H1 (cell line): ENCODE measurements at regions of chr2 and their contacts with region 1.

Region 1: GRCh38 chr2:39728941-39729351 is 50.1 kb downstream of the THUMPD2 start:
- DNase-seq: peak; percentile 3 to 69
- H3K4me3 ChIP-seq: no peak overlapping the region
- H3K27ac ChIP-seq: no peak overlapping the region
- H3K4me1 ChIP-seq: no peaks in the 10 kb centered on the region
- H3K27me3 ChIP-seq: no peaks in the 10 kb centered on the region
- CTCF ChIP-seq: peak; percentile 73 to 77 (median 74)
- EP300 ChIP-seq: no peak
- POLR2A ChIP-seq: no peak
- RAD21 ChIP-seq: peak; percentile 78 to 80

Region 2: GRCh38 chr2:39379643-39380524 is 349.1 kb before region 1 on chr2:
- CTCF ChIA-PET with region 1: interaction called, 18 read pairs
- POLR2A ChIA-PET with region 1: no interaction called
- DNase-seq: no peak
- H3K4me3 ChIP-seq: no peak overlapping the region
- H3K27ac ChIP-seq: no peak overlapping the region
- H3K4me1 ChIP-seq: peaks cover 3 to 6% (median 4%) of the 10 kb centered on the region in 4 experiments; a peak in 6 of 7 replicates
- H3K27me3 ChIP-seq: peaks cover 0 to 1% (median 0%) of the 10 kb centered on the region in 4 experiments; a peak in 1 of 7 replicates
- CTCF ChIP-seq: peak in 2 of 3 experiments; percentile 29 to 35; a peak in 2 of 4 replicates
- EP300 ChIP-seq: no peak
- POLR2A ChIP-seq: no peak
- RAD21 ChIP-seq: peak; percentile 39 to 44; a peak in 3 of 4 replicates

Region 3: GRCh38 chr2:39513641-39514094 is 215.3 kb before region 1 on chr2:
- CTCF ChIA-PET with region 1: interaction called, 30 read pairs
- POLR2A ChIA-PET with region 1: no interaction called
- DNase-seq: no peak
- H3K4me3 ChIP-seq: no peak overlapping the region
- H3K27ac ChIP-seq: no peak overlapping the region
- H3K4me1 ChIP-seq: peaks cover 5 to 29% (median 15%) of the 10 kb centered on the region in 4 experiments
- H3K27me3 ChIP-seq: no peaks in the 10 kb centered on the region
- CTCF ChIP-seq: peak; percentile 10 to 60 (median 46)
- EP300 ChIP-seq: no peak
- POLR2A ChIP-seq: no peak
- RAD21 ChIP-seq: peak; percentile 52 to 69; a peak in 3 of 4 replicates

Region 4: DNA sequence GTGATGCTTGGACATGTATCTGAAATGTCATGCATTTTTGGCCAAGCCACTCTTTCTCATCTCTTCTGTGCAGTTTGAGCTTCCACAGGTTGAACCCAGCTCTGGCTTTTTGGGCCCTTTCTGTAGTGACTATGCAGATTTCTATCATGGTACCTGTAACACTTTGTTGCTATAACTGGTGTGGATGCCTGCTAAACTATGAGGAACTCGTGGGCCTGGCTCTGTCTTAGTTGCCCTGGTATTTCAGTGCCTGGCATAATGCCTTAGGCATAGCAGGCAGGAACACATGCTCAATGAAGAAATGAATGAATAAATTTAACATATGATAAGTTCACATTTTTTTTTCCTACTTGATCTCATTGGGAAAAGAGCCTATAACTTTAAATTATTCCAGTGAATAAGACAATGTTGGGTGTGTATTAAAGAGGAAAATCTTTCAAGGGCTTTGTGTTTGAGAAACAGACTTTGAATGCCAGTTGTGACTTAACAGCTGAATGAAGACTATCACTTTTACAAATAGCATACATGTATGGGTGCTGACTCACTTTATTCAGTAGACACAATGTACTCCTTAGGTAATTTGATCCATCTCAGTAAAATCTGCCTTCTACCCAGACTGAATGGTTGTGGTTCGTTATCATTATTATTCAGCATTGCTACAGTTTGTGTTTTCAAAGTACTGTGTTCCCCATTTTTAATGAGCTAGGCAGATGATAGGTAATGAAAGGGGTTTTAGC is 205.5 kb before region 1 on chr2:
- CTCF ChIA-PET with region 1: interaction called, 30 read pairs
- POLR2A ChIA-PET with region 1: no interaction called
- DNase-seq: no peak
- H3K4me3 ChIP-seq: no peak overlapping the region
- H3K27ac ChIP-seq: no peak overlapping the region
- H3K4me1 ChIP-seq: peaks cover 0 to 4% (median 0%) of the 10 kb centered on the region in 4 experiments; a peak in 1 of 7 replicates
- H3K27me3 ChIP-seq: no peaks in the 10 kb centered on the region
- CTCF ChIP-seq: no peak
- EP300 ChIP-seq: no peak
- POLR2A ChIP-seq: no peak
- RAD21 ChIP-seq: no peak

Region 5: DNA sequence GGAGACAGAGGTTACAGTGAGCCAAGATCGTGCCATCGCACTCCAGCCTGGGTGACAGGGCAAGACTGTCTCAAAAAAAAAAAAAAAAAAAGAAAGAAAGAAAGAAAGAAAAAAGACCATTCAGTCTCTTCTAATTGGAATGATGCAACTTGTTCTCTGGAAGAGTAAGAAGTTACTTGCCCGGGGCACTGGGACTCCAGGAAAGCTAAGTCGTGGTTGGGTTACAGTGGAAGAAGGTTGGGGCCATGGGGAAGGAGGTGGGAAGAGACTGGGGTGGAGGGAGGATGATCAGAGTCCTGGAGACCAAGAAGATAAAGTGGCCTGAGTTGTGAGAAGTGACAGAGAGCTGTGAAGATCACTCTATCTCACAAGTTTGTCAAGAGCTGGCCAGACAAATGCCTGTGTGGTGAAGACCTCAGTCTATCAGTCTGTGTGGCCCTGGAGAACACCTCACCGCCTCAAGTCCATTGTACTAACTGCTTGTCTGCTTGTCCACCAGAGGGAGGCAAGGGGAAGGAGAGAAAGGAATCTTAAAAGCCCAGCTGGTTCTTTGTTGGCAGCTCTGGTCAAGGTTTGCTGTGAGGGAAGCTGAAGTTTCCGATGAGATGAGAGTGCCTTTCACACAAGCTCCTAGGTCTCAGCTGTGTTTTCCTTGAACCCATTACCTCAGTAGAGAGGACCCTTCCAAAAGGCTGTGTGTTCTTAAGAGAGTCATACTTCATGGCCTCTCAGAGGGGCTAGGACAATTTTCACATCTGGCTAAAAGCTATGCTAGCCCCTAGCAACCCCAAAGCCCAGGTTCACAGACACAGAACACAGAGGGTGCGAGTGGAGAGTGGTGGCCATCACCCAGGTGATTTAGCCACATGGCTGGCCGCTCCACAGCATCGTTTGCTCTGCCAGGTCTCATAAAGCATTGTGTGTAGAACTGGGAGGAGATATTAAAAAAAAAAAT is 135.2 kb before region 1 on chr2:
- CTCF ChIA-PET with region 1: interaction called, 109 read pairs
- POLR2A ChIA-PET with region 1: no interaction called
- DNase-seq: peak in 1 of 2 experiments; percentile 15
- H3K4me3 ChIP-seq: no peak overlapping the region
- H3K27ac ChIP-seq: no peak overlapping the region
- H3K4me1 ChIP-seq: peaks cover 0 to 5% (median 1%) of the 10 kb centered on the region in 4 experiments; a peak in 1 of 7 replicates
- H3K27me3 ChIP-seq: no peaks in the 10 kb centered on the region
- CTCF ChIP-seq: peak; percentile 54 to 88 (median 71)
- EP300 ChIP-seq: no peak
- POLR2A ChIP-seq: no peak
- RAD21 ChIP-seq: peak; percentile 75 to 81

Region 6: GRCh38 chr2:39705638-39706037 is 23.3 kb before region 1 on chr2:
- CTCF ChIA-PET with region 1: interaction called, 103 read pairs
- POLR2A ChIA-PET with region 1: no interaction called
- DNase-seq: no peak
- H3K4me3 ChIP-seq: no peak overlapping the region
- H3K27ac ChIP-seq: no peak overlapping the region
- H3K4me1 ChIP-seq: no peaks in the 10 kb centered on the region
- H3K27me3 ChIP-seq: no peaks in the 10 kb centered on the region
- CTCF ChIP-seq: no peak
- EP300 ChIP-seq: no peak
- POLR2A ChIP-seq: no peak
- RAD21 ChIP-seq: no peak

Region 7: DNA sequence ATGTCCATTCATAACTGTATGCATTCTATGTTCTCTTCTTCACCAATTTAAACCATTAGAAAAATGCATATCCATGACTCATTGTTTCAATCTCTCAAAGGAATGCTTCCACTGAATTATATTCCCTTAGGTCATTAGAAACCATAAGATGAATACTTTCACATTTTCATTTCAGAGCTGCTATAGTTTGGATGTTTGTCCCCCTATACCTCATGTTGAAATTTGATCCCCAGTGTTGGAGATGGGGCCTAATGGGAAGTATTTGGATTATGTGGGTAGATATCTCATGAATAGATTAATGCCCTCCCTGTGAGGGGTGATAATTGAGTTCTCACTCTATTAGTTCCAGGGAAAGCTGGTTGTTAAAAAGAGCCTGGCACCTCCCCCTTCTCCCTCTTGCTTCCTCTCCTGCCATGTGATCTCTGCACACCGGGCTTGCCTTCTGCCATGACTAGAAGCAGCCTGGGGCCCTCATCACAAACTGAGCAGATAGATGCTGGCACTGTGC is 14.4 kb after region 1 on chr2:
- CTCF ChIA-PET with region 1: interaction called, 16 read pairs
- POLR2A ChIA-PET with region 1: interaction called, 3 read pairs
- DNase-seq: no peak
- H3K4me3 ChIP-seq: no peak overlapping the region
- H3K27ac ChIP-seq: no peak overlapping the region
- H3K4me1 ChIP-seq: no peaks in the 10 kb centered on the region
- H3K27me3 ChIP-seq: no peaks in the 10 kb centered on the region
- CTCF ChIP-seq: no peak
- EP300 ChIP-seq: no peak
- POLR2A ChIP-seq: no peak
- RAD21 ChIP-seq: no peak

Region 8: GRCh38 chr2:39786761-39787518 is 58.0 kb after region 1 on chr2:
- CTCF ChIA-PET with region 1: no interaction called
- POLR2A ChIA-PET with region 1: no interaction called
- DNase-seq: no peak
- H3K4me3 ChIP-seq: no peak overlapping the region
- H3K27ac ChIP-seq: no peak overlapping the region
- H3K4me1 ChIP-seq: no peaks in the 10 kb centered on the region; a peak in 1 of 7 replicates
- H3K27me3 ChIP-seq: no peaks in the 10 kb centered on the region
- CTCF ChIP-seq: no peak
- EP300 ChIP-seq: no peak
- POLR2A ChIP-seq: no peak
- RAD21 ChIP-seq: no peak

Region 9: GRCh38 chr2:39875182-39875898 is 146.4 kb after region 1 on chr2:
- CTCF ChIA-PET with region 1: no interaction called
- POLR2A ChIA-PET with region 1: no interaction called
- DNase-seq: no peak
- H3K4me3 ChIP-seq: no peak overlapping the region
- H3K27ac ChIP-seq: no peak overlapping the region
- H3K4me1 ChIP-seq: no peaks in the 10 kb centered on the region
- H3K27me3 ChIP-seq: no peaks in the 10 kb centered on the region
- CTCF ChIP-seq: no peak
- EP300 ChIP-seq: no peak
- POLR2A ChIP-seq: no peak
- RAD21 ChIP-seq: no peak

Region 10: GRCh38 chr2:39913648-39914461 is 184.9 kb after region 1 on chr2:
- CTCF ChIA-PET with region 1: no interaction called
- POLR2A ChIA-PET with region 1: no interaction called
- DNase-seq: peak in 1 of 2 experiments; percentile 10
- H3K4me3 ChIP-seq: no peak overlapping the region
- H3K27ac ChIP-seq: no peak overlapping the region
- H3K4me1 ChIP-seq: peaks cover 0 to 5% (median 0%) of the 10 kb centered on the region in 4 experiments; a peak in 2 of 7 replicates
- H3K27me3 ChIP-seq: no peaks in the 10 kb centered on the region
- CTCF ChIP-seq: peak in 2 of 3 experiments; percentile 58 to 71; a peak in 2 of 4 replicates
- EP300 ChIP-seq: no peak
- POLR2A ChIP-seq: no peak
- RAD21 ChIP-seq: peak; percentile 93 to 95